A549 (cell line): ENCODE measurements at regions of chr1 and their contacts with region 1.

Region 1: GRCh38 chr1:214648801-214649200 is 45.8 kb downstream of the CENPF start:
- DNase-seq: no peak
- ATAC-seq: no peak
- H3K4me3 ChIP-seq: no peak overlapping the region
- H3K27ac ChIP-seq: no peak overlapping the region
- H3K4me1 ChIP-seq: no peaks in the 10 kb centered on the region
- CTCF ChIP-seq: no peak
- EP300 ChIP-seq: no peak
- POLR2A ChIP-seq: no peak
- RAD21 ChIP-seq: no peak

Region 2: DNA sequence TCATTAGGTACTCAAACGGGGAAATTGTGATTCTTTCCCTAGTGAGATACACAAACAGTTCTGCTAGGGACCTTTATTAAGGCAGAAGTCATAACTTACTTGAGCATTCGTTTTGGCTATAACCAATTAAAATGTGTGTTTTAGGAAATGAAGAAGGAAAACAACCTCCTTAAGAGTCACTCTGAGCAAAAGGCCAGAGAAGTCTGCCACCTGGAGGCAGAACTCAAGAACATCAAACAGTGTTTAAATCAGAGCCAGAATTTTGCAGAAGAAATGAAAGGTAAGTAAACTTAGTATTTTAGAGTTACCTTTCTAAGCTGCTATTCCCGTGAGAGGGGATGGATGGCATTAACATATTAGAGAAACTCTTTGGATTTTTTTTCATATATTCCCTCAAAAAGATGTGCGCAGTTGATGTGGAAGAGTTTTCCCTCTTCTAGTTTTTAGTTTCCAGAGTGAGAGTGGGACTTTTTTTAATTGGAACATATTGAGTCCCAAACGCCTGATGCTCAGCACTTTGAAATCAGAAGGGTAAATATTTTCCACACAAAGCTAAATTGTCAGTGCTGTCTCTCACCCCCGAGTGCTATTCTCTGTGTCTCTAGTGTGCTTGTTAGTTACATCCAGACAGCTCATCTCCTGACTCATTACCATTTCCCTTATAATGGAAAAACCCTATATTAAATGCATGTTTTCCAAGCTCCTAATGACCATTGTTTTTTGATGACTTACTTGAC is 10.9 kb before region 1 on chr1:
- CTCF ChIA-PET with region 1: interaction called, 44 read pairs
- POLR2A ChIA-PET with region 1: no interaction called
- DNase-seq: peak; percentile 43 to 58
- ATAC-seq: peak; percentile 72 to 84; a peak in 4 of 6 replicates
- H3K4me3 ChIP-seq: no peak overlapping the region
- H3K27ac ChIP-seq: no peak overlapping the region
- H3K4me1 ChIP-seq: no peaks in the 10 kb centered on the region
- CTCF ChIP-seq: peak; percentile 78
- EP300 ChIP-seq: no peak
- POLR2A ChIP-seq: no peak
- RAD21 ChIP-seq: peak; percentile 58 to 61

Region 3: GRCh38 chr1:214685906-214686305 is 37.1 kb after region 1 on chr1:
- CTCF ChIA-PET with region 1: no interaction called
- POLR2A ChIA-PET with region 1: no interaction called
- DNase-seq: no peak
- ATAC-seq: no peak
- H3K4me3 ChIP-seq: no peak overlapping the region
- H3K27ac ChIP-seq: no peak overlapping the region
- H3K4me1 ChIP-seq: no peaks in the 10 kb centered on the region
- CTCF ChIP-seq: no peak
- EP300 ChIP-seq: no peak
- POLR2A ChIP-seq: no peak
- RAD21 ChIP-seq: no peak